ENCODE measurements at regions of chr7 and their contacts with region 1.

Region 1: GRCh38 chr7:98021588-98022351 is 31.8 kb upstream of the OCM2 start:
- DNase-seq: no peak
- H3K4me3 ChIP-seq: no peak overlapping the region
- CTCF ChIP-seq: peak; percentile 97

Region 2: GRCh38 chr7:98038731-98039130 is 17.0 kb after region 1 on chr7:
- CTCF ChIA-PET with region 1: interaction called, 34 read pairs
- POLR2A ChIA-PET with region 1: no interaction called
- DNase-seq: no peak
- H3K4me3 ChIP-seq: no peak overlapping the region
- CTCF ChIP-seq: no peak

Region 3: DNA sequence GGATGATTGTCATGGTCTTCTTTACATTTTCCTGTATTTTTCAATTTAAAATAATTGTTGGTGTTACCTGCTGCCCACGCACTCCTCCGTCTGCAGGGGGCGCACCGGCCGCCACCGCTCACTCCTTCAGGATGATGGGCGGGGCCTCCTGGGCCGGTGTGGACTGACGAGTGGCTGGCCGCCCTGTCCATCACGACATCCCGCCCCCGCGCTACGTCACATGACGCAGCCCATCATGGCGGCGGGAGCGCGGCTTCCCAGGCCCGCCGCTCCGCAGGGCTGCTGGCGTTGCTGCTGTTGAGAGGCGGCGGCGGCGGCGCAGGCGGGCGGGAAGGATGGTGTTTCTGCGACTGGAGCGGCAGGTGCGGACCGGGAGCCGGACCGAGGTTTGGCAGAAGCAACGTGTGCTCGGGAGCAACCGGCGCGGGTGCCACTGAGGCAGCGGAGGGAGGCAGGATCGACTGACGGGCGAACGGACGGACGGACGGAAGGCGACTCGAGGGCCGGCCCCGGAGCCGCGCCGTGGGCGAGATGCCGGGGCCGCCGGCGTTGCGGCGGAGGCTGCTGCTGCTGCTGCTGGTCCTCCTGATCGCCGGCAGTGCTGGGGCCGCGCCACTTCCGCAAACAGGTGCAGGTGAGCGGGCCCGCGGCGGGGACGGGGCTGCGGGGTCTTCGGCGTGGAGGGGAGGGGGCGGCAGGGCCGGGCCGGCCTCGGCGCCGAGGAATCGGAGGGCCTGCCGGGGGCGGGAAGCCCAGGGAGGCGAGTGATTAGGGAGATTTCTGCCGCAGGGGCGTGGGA is 85.1 kb after region 1 on chr7 and contains the start of gene LMTK2:
- CTCF ChIA-PET with region 1: interaction called, 14 read pairs
- POLR2A ChIA-PET with region 1: no interaction called
- DNase-seq: peak; percentile 36
- H3K4me3 ChIP-seq: peak within 1 kb of the TSS; percentile 84
- CTCF ChIP-seq: peak; percentile 95

Region 4: GRCh38 chr7:98240961-98241674 is 219.3 kb after region 1 on chr7:
- CTCF ChIA-PET with region 1: interaction called, 13 read pairs
- POLR2A ChIA-PET with region 1: no interaction called
- DNase-seq: no peak
- H3K4me3 ChIP-seq: no peak overlapping the region
- CTCF ChIP-seq: peak; percentile 79

Measured in AG04449 (cell line).